ENCODE measurements at regions of chr1 and their contacts with region 1.

Region 1: GRCh38 chr1:196951711-196952394 is 8.3 kb downstream of the CFHR2 start:
- DNase-seq: no peak
- H3K4me3 Mint-ChIP-seq: no peak overlapping the region
- H3K27ac Mint-ChIP-seq: no peak overlapping the region
- H3K4me1 Mint-ChIP-seq: no peaks in the 10 kb centered on the region
- H3K27me3 Mint-ChIP-seq: no peaks in the 10 kb centered on the region

Region 2: GRCh38 chr1:196808529-196809235 is 143.2 kb before region 1 on chr1:
- intact Hi-C with region 1: loop called (anchors 10 kb)
- DNase-seq: no peak
- H3K4me3 Mint-ChIP-seq: no peak overlapping the region
- H3K27ac Mint-ChIP-seq: no peak overlapping the region
- H3K4me1 Mint-ChIP-seq: no peaks in the 10 kb centered on the region
- H3K27me3 Mint-ChIP-seq: no peaks in the 10 kb centered on the region

Region 3: GRCh38 chr1:196933531-196934189 is 18.2 kb before region 1 on chr1:
- intact Hi-C with region 1: no loop called
- DNase-seq: no peak
- H3K4me3 Mint-ChIP-seq: no peak overlapping the region
- H3K27ac Mint-ChIP-seq: no peak overlapping the region
- H3K4me1 Mint-ChIP-seq: no peaks in the 10 kb centered on the region
- H3K27me3 Mint-ChIP-seq: no peaks in the 10 kb centered on the region

Region 4: GRCh38 chr1:196977278-196977677 is 25.4 kb after region 1 on chr1 and contains the start of gene CFHR5:
- intact Hi-C with region 1: no loop called
- DNase-seq: no peak
- H3K4me3 Mint-ChIP-seq: no peak within 1 kb of the TSS
- H3K27ac Mint-ChIP-seq: no peak within 1 kb of the TSS
- H3K4me1 Mint-ChIP-seq: no peaks in the 10 kb centered on the region
- H3K27me3 Mint-ChIP-seq: no peaks in the 10 kb centered on the region
- total RNA-seq, gene CFHR5: not detected in 2 replicates